Activated T-helper 1 cell treated with anti-CD3 and anti-CD28 coated beads, Interleukin-12 subunit alpha, Interleukin-12 subunit beta, Interleukin-2, Interleukin-4 antibody, amounts not matched to agents 30 ng/mL and 10 ng/mL and 1 ng/mL, durations not matched to agents 14 hours and 24 hours and 36 hours (primary cell): ENCODE measurements at regions of chr10 and their contacts with region 1.

Region 1: GRCh38 chr10:114304017-114304570 is 65.0 kb downstream of the VWA2 start:
- DNase-seq: peak; percentile 54
- H3K4me3 Mint-ChIP-seq: peak overlapping the region; percentile 84
- H3K27ac Mint-ChIP-seq: peak overlapping the region; percentile 54
- H3K4me1 Mint-ChIP-seq: peaks cover 24% of the 10 kb centered on the region
- H3K27me3 Mint-ChIP-seq: peaks cover 5% of the 10 kb centered on the region

Region 2: GRCh38 chr10:114208351-114208750 is 95.7 kb before region 1 on chr10:
- intact Hi-C with region 1: no loop called
- DNase-seq: no peak
- H3K4me3 Mint-ChIP-seq: no peak overlapping the region
- H3K27ac Mint-ChIP-seq: no peak overlapping the region
- H3K4me1 Mint-ChIP-seq: no peaks in the 10 kb centered on the region
- H3K27me3 Mint-ChIP-seq: peaks cover 17% of the 10 kb centered on the region

Region 3: DNA sequence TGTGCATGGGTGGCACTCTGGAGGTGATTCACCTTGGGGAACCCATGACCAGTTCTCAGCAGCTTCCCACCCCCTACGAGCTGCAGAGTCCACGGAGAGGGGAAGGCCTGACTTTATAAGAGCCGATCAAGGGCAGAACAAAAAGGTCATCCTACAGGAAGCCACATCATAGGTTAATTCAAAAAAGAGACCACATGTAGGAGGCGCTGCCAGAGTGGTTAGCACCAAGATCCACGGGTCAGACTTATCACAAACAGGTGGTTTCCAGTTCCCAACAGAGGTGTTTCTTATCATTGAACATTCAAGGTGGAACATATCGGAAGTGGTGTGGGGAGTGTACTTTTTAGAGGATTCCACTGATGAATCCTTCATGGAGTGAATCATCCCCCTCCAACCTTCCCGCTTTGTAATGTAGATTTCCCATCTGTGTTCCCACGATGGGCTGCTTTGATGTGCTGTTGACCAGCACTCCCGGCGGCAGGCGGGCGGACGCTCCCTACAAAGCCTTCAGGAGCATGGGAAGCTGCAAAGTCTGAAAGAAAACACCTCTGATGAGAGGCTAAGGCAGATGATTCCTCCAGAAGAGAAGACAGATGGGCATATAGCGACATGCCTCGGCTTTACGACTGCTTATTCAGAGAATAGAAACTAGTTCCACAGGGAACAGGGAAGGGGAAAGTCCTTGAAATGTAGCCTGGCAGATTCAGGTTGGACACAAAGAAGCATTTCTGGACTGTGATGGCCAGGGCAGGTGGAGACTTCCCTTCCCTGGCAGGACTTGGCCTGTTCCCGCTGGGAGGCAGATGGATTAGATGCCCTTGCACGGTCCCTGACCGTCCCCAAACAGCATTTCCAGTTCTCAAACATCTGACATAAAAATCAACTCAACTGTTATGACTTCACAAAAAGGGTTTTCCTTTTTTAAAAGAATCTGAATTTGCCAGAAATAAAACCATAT is 33.7 kb after region 1 on chr10:
- intact Hi-C with region 1: loop called (anchors 2 kb)
- DNase-seq: no peak
- H3K4me3 Mint-ChIP-seq: no peak overlapping the region
- H3K27ac Mint-ChIP-seq: peak overlapping the region; percentile 61
- H3K4me1 Mint-ChIP-seq: peaks cover 26% of the 10 kb centered on the region
- H3K27me3 Mint-ChIP-seq: peaks cover 10% of the 10 kb centered on the region

Region 4: GRCh38 chr10:114458955-114459354 is 154.9 kb after region 1 on chr10:
- intact Hi-C with region 1: loop called (anchors 1 kb)
- DNase-seq: no peak
- H3K4me3 Mint-ChIP-seq: no peak overlapping the region
- H3K27ac Mint-ChIP-seq: no peak overlapping the region
- H3K4me1 Mint-ChIP-seq: peaks cover 9% of the 10 kb centered on the region
- H3K27me3 Mint-ChIP-seq: no peaks in the 10 kb centered on the region

Region 5: DNA sequence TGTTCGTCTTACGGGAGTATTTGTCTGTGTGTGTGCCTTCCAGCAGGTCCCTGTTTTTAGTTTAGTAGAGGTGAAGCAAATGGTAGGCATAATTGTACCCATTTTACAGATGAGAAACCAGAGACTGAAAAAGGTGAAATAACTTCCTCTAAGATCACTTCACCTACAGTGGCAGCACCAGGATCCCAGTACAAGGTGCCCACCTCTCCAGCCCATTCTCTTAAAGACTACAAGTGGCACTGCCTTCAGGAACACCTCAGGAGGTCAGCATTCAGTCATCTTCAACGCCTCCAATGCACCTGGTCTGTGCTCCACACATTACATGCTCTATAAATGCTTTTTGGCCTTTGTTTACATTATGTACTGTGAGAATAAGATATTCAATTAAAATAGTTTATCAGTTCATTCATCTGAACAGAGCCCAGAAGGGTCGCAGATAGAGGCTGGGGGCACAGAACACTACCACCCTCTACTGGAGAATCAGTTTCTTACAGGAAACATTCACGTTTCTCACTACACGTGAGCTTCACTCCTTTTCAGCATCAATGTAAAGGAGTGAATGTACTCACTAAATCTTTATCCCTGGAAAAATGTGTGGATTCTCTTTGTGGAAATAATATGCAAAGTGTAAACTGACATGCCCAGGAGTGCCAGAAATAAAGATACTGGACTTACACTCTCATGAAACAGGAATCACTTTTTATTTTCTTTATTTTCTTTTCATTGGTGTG is 399.4 kb after region 1 on chr10:
- intact Hi-C with region 1: loop called (anchors 1 kb)
- DNase-seq: no peak
- H3K4me3 Mint-ChIP-seq: no peak overlapping the region
- H3K27ac Mint-ChIP-seq: no peak overlapping the region
- H3K4me1 Mint-ChIP-seq: no peaks in the 10 kb centered on the region
- H3K27me3 Mint-ChIP-seq: peaks cover 28% of the 10 kb centered on the region

Region 6: GRCh38 chr10:114937962-114938855 is 634.1 kb after region 1 on chr10 and contains the start of gene TRUB1:
- intact Hi-C with region 1: loop called (anchors 10 kb)
- DNase-seq: peak; percentile 83
- H3K4me3 Mint-ChIP-seq: peak within 1 kb of the TSS; percentile 99
- H3K27ac Mint-ChIP-seq: peak within 1 kb of the TSS; percentile 84
- H3K4me1 Mint-ChIP-seq: peaks cover 35% of the 10 kb centered on the region
- H3K27me3 Mint-ChIP-seq: no peaks in the 10 kb centered on the region
- total RNA-seq, gene TRUB1: 21.6 TPM in 2 replicates